GM10248 (cell line): ENCODE measurements at regions of chr15 and their contacts with region 1.

Region 1: DNA sequence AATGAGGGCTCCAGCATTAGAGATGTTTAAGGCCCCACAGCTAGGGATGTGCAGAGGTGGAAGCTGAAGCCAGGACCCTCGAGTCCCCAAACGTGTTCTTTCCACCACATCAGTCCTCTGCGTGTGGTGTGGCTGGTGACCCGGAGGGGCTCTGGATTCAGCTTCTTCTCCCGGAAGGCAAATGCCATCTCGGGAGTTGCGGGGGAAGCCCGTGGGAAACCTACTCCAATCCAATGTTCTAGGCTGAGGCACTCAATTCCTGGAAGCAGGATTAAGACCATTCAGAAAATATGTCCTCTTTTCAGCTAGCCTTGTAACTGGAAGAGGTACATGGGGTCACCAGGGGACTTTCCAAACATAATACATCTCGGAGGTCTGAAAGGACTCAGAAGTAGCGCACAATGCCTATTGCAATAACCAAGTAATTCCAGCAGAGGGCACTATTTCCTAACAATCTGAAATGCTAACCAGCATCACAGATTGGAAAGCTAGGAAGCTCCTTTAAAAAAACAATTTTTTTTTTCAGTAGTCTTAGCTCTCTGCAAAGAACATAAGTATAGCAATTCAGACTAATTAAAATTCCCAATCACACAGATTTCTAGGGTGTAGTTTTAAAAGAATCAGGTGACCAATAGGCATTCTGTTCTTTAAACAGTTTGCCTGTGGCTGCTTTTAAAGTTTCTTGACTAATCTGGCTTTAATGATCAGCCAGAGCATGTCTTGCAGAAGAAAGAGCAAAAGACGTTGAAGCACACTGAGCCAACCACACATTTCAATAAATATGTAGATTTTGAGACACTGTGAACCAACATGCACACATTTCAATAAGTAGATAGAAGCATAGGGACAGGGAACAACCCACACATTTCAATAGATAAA is 36.1 kb downstream of the BNC1 start:
- DNase-seq: peak; percentile 29
- CTCF ChIP-seq: peak; percentile 64

Region 2: DNA sequence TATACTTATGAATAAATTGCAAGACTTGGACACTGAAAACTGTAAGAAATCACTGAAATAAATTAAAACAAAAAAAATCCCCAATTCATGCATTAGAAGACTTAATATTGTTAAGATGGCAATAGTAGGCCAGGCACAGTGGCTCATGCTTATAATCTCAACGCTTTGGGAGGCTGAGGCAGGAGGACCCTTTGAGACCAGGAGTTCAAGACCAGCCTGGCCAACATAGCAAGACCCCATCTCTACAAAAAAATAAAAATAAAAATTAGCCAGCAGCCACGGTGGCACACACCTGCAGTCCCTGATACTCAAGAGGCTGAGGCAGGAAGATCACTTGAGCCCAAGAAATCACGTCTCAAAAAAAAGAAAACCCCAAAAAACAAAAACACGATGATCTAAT is 637.0 kb before region 1 on chr15:
- CTCF ChIA-PET with region 1: no interaction called
- POLR2A ChIA-PET with region 1: no interaction called
- DNase-seq: no peak
- CTCF ChIP-seq: no peak

Region 3: GRCh38 chr15:83081256-83082014 is 167.0 kb before region 1 on chr15:
- CTCF ChIA-PET with region 1: no interaction called
- POLR2A ChIA-PET with region 1: no interaction called
- DNase-seq: no peak
- CTCF ChIP-seq: no peak

Region 4: GRCh38 chr15:83158401-83158800 is 90.0 kb before region 1 on chr15:
- CTCF ChIA-PET with region 1: no interaction called
- POLR2A ChIA-PET with region 1: no interaction called
- DNase-seq: no peak
- CTCF ChIP-seq: no peak

Region 5: DNA sequence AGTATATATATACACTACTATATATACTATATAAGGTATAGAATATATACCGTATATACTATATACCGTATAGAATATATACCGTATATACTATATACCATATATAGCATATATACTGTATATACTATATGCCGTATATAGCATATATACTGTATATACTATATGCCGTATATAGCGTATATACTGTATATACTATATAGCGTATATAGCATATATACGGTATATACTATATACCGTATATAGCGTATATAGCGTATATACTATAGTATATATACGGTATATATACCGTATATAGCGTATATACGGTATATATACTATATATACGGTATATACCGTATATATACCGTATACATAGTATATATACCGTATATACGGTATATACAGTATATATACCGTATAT is 18.1 kb before region 1 on chr15:
- CTCF ChIA-PET with region 1: interaction called, 20 read pairs
- POLR2A ChIA-PET with region 1: no interaction called
- DNase-seq: no peak
- CTCF ChIP-seq: no peak

Region 6: GRCh38 chr15:83304861-83305703 is 56.7 kb after region 1 on chr15:
- CTCF ChIA-PET with region 1: no interaction called
- POLR2A ChIA-PET with region 1: no interaction called
- DNase-seq: no peak
- CTCF ChIP-seq: no peak

Region 7: DNA sequence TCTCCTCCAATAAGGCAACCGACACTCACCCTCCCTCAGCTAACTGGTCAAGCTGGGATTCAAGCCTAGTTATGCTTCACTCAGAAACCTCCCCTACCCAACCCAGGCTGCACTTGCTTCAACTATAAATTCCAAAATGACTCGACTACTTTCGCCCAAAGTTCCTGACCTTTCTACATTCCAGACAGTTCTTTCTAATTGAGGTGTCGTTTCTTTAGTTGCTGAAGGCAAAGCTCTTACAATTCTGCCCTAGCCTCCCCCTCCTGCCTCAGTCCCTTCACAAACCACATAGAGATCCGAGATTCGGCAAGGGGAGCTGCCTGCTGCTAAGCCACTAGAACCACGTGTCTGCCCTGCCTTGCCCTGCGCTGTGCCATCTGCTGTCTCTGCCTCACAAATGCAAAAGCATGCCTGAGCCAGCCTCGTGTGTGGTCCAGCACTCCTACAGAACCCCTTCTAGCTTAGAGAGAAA is 124.1 kb after region 1 on chr15:
- CTCF ChIA-PET with region 1: interaction called, 11 read pairs
- POLR2A ChIA-PET with region 1: no interaction called
- DNase-seq: no peak
- CTCF ChIP-seq: no peak

Region 8: DNA sequence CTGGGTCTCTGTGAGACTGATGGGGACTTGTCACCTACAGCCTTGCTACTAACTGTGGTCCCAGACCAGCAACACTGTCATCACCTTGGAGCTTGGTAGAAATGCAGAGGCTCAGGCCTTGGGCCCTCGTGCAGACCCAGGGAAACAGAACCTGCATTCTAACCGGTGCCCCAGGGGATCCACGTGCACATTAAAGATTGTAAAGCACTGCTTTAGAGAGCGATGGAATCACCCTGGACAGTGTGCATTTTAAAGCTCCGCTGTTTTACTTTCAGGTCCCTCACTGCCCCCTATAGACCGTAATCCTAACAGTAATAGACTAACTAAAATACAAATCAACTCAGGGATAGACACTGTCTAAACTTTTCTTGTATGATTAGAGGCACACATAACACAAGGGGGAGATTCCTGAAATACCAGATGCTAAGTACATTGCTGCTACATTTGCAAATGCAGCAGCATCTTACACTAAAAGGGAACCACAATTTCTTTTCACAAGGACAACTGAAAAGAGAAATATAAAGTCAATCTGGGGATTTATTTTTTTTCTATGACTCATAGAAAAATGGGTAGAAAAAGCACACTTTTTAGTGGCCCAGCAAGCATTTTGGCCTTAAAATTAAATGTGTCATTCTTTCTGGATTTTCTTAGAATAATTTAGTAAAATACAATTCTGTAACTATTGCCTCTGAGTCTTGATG is 188.2 kb after region 1 on chr15:
- CTCF ChIA-PET with region 1: interaction called, 19 read pairs
- POLR2A ChIA-PET with region 1: no interaction called
- DNase-seq: no peak
- CTCF ChIP-seq: no peak

Region 9: DNA sequence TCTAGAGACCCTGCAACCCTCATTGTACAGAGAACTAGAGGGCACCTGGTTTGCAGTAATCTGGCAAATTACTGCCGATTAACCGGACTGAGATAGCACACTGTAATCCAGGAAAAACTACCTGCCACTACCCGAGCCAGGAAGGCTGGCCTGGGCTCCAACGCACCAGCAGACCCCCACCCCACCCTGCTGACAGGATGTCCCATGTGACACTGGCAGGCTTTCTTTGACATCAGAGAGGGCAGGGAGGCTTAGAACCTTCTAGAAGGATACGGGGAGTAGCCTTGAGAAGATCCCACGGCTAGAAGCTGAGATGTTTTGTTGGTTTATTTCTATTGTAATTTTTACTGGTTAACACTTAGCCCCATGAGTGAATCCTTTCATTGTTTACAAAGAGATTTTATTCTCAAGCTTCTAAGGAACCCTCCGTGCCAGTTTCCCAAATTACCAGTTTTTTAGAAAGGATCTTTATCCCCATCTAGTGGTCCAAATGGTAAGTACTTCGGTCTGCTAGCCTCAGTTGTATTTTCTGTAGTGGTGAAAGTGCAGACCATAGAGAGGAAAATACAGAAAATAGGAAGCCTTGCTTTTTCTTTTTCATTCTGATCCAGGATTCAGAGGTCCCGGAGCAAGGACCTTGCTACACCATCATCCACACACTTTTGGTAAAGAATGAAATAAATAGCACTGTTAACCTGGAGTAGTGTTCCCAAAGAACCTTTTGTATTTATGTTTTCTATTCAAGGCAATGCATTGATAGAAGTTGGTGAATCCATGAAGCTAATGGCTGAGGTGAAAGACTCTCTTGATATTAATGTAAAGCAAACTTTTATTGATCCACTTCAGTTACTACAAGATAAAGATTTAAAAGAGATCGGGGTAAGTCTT is 323.7 kb after region 1 on chr15:
- CTCF ChIA-PET with region 1: interaction called, 17 read pairs
- POLR2A ChIA-PET with region 1: no interaction called
- DNase-seq: peak; percentile 34
- CTCF ChIP-seq: peak; percentile 32